BJ (cell line): ENCODE measurements at regions of chr1 and their contacts with region 1.

Region 1: DNA sequence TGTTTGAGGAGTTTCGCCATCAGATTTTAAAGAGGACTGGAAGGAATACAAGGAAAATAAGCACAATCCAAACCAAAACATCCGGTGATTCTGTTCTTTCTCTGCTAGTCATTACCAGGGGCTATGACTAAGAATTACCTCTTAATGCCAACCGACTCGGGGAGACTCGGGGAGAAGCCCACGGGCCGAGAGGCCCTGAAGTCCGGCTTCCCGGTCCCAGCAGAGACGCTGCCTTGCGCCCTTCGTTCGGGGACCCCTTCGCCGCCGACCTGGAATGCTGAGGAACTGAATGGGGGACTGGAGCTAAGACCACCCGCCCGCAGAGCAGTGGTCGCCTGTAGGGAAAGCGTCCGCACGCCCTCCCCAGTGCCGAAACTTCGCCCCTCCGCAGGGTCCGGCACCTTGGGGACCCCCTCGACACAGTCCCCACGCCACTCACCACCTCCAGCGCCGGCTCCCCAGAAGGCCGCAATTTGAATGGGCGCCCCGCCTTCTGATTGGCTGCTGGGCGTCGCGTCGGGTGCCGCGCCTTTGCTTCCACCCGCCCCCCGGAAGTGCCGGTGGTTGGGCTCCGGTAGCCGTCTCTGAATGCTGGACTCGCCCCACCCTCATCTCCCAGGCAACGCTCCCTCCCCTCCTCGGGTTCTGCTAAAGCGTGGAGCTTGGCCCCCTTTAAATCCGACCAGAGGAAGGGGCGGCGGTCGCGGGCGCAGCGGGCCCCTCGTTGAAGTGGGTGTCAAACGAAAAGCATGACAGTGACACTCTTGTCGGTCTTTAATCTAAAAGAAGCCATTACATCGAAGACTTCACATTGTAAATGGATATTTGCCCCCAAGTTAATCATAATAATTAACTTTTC is at the start of gene KIF14:
- DNase-seq: peak; percentile 40
- H3K4me3 ChIP-seq: peak within 1 kb of the TSS; percentile 69
- H3K27me3 ChIP-seq: no peaks in the 10 kb centered on the region
- CTCF ChIP-seq: no peak
- polyA plus RNA-seq, gene KIF14: 2.1 and 4.1 TPM in 2 replicates

Region 2: GRCh38 chr1:200669314-200670241 is 49.1 kb after region 1 on chr1 and contains the start of gene DDX59:
- CTCF ChIA-PET with region 1: interaction called, 17 read pairs
- POLR2A ChIA-PET with region 1: no interaction called
- DNase-seq: peak; percentile 81
- H3K4me3 ChIP-seq: peak within 1 kb of the TSS; percentile 79
- H3K27me3 ChIP-seq: no peaks in the 10 kb centered on the region
- CTCF ChIP-seq: no peak
- polyA plus RNA-seq, gene DDX59: 14.0 and 14.9 TPM in 2 replicates

Region 3: GRCh38 chr1:200802865-200803512 is 182.5 kb after region 1 on chr1:
- CTCF ChIA-PET with region 1: interaction called, 16 read pairs
- POLR2A ChIA-PET with region 1: no interaction called
- DNase-seq: no peak
- H3K4me3 ChIP-seq: no peak overlapping the region
- H3K27me3 ChIP-seq: no peaks in the 10 kb centered on the region
- CTCF ChIP-seq: peak; percentile 95

Region 4: GRCh38 chr1:200837931-200838571 is 217.5 kb after region 1 on chr1:
- CTCF ChIA-PET with region 1: interaction called, 13 read pairs
- POLR2A ChIA-PET with region 1: no interaction called
- DNase-seq: peak; percentile 9
- H3K4me3 ChIP-seq: no peak overlapping the region
- H3K27me3 ChIP-seq: no peaks in the 10 kb centered on the region
- CTCF ChIP-seq: peak; percentile 35; the same call in 1 of the 2 replicates

Region 5: DNA sequence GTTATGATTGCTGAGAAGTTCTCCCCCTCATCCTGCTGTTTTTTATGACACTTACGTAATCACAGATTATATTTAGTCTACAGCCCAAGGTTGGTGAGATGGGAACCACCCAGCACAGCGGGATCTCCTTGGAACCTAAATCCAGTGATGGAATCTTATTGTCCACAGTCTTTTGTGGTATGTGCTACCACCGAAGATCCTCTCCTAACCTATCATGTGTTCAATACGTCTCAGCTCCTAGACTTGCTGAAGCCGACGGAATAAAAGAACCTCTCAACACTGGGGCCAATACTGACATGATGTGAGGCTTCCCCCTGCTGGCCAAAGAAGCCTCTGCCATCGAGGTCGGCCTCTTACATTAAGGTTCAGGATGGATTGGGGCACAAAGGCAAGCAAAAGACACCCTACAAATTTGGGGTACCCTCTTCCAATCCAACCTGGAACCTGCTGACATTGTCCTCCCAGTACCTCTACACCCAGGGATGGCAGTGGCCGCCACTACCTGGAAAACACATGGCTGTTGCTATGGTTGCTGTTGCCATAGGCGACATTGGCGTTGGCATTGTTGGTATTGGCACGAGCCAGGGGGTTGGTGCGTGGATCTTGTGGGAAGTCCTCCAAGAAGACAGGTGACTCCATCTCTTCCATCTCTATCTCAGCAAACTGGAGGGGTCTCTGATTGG is 422.4 kb after region 1 on chr1:
- CTCF ChIA-PET with region 1: interaction called, 12 read pairs
- POLR2A ChIA-PET with region 1: no interaction called
- DNase-seq: no peak
- H3K4me3 ChIP-seq: no peak overlapping the region
- H3K27me3 ChIP-seq: peaks cover 6% of the 10 kb centered on the region
- CTCF ChIP-seq: peak; percentile 86